Activated naive CD4-positive, alpha-beta T cell treated with anti-CD3 and anti-CD28 coated beads for 36 hours (primary cell): ENCODE measurements at regions of chr6 and their contacts with region 1.

Region 1: GRCh38 chr6:3868544-3868943 is 19.4 kb downstream of the FAM50B start:
- DNase-seq: no peak
- H3K4me3 Mint-ChIP-seq: no peak overlapping the region
- H3K27ac Mint-ChIP-seq: peak overlapping the region; percentile 48
- H3K4me1 Mint-ChIP-seq: peaks cover 26% of the 10 kb centered on the region
- H3K27me3 Mint-ChIP-seq: peaks cover 2% of the 10 kb centered on the region

Region 2: GRCh38 chr6:3162565-3163247 is 705.8 kb before region 1 on chr6:
- CTCF ChIA-PET with region 1: no interaction called
- intact Hi-C with region 1: no loop called
- DNase-seq: peak; percentile 57
- H3K4me3 Mint-ChIP-seq: peak overlapping the region; percentile 80
- H3K27ac Mint-ChIP-seq: no peak overlapping the region
- H3K4me1 Mint-ChIP-seq: peaks cover 24% of the 10 kb centered on the region
- H3K27me3 Mint-ChIP-seq: peaks cover 23% of the 10 kb centered on the region

Region 3: GRCh38 chr6:3776881-3777507 is 91.5 kb before region 1 on chr6:
- CTCF ChIA-PET with region 1: no interaction called
- intact Hi-C with region 1: no loop called
- DNase-seq: no peak
- H3K4me3 Mint-ChIP-seq: no peak overlapping the region
- H3K27ac Mint-ChIP-seq: no peak overlapping the region
- H3K4me1 Mint-ChIP-seq: no peaks in the 10 kb centered on the region
- H3K27me3 Mint-ChIP-seq: peaks cover 9% of the 10 kb centered on the region

Region 4: GRCh38 chr6:3919130-3919628 is 50.6 kb after region 1 on chr6:
- CTCF ChIA-PET with region 1: no interaction called
- intact Hi-C with region 1: loop called (anchors 5 kb)
- DNase-seq: no peak
- H3K4me3 Mint-ChIP-seq: no peak overlapping the region
- H3K27ac Mint-ChIP-seq: no peak overlapping the region
- H3K4me1 Mint-ChIP-seq: peaks cover 23% of the 10 kb centered on the region
- H3K27me3 Mint-ChIP-seq: peaks cover 7% of the 10 kb centered on the region